ENCODE measurements at regions of chr14 and their contacts with region 1.

Region 1: GRCh38 chr14:39169541-39169900 is 612 bp downstream of the TRAPPC6B start:
- DNase-seq: no peak
- ATAC-seq: peak in 1 of 2 experiments; percentile 30; a peak in 3 of 6 replicates
- H3K4me3 ChIP-seq: peak overlapping the region; percentile 80
- H3K27ac ChIP-seq: peak overlapping the region; percentile 94 to 97
- H3K4me1 ChIP-seq: peaks cover 23% of the 10 kb centered on the region
- CTCF ChIP-seq: no peak
- EP300 ChIP-seq: no peak
- POLR2A ChIP-seq: no peak
- RAD21 ChIP-seq: no peak

Region 2: GRCh38 chr14:39114073-39114838 is 55.3 kb before region 1 on chr14 and contains the start of gene GEMIN2:
- CTCF ChIA-PET with region 1: interaction called, 3 read pairs
- POLR2A ChIA-PET with region 1: interaction called, 26 read pairs
- DNase-seq: peak; percentile 96 to 97
- ATAC-seq: peak; percentile 98
- H3K4me3 ChIP-seq: peak within 1 kb of the TSS; percentile 69
- H3K27ac ChIP-seq: peak within 1 kb of the TSS; percentile 83 to 85
- H3K4me1 ChIP-seq: peaks cover 13% of the 10 kb centered on the region; the same call in 2 of the 3 replicates
- CTCF ChIP-seq: no peak
- EP300 ChIP-seq: no peak
- POLR2A ChIP-seq: peak; percentile 94
- RAD21 ChIP-seq: no peak
- polyA plus RNA-seq, gene GEMIN2: 48.1 and 67.8 TPM in 2 replicates

Region 3: GRCh38 chr14:39157491-39157890 is 12.0 kb before region 1 on chr14:
- CTCF ChIA-PET with region 1: interaction called, 8 read pairs
- POLR2A ChIA-PET with region 1: interaction called, 10 read pairs
- DNase-seq: no peak
- ATAC-seq: no peak
- H3K4me3 ChIP-seq: no peak overlapping the region
- H3K27ac ChIP-seq: no peak overlapping the region
- H3K4me1 ChIP-seq: no peaks in the 10 kb centered on the region
- CTCF ChIP-seq: no peak
- EP300 ChIP-seq: no peak
- POLR2A ChIP-seq: no peak
- RAD21 ChIP-seq: no peak

Region 4: DNA sequence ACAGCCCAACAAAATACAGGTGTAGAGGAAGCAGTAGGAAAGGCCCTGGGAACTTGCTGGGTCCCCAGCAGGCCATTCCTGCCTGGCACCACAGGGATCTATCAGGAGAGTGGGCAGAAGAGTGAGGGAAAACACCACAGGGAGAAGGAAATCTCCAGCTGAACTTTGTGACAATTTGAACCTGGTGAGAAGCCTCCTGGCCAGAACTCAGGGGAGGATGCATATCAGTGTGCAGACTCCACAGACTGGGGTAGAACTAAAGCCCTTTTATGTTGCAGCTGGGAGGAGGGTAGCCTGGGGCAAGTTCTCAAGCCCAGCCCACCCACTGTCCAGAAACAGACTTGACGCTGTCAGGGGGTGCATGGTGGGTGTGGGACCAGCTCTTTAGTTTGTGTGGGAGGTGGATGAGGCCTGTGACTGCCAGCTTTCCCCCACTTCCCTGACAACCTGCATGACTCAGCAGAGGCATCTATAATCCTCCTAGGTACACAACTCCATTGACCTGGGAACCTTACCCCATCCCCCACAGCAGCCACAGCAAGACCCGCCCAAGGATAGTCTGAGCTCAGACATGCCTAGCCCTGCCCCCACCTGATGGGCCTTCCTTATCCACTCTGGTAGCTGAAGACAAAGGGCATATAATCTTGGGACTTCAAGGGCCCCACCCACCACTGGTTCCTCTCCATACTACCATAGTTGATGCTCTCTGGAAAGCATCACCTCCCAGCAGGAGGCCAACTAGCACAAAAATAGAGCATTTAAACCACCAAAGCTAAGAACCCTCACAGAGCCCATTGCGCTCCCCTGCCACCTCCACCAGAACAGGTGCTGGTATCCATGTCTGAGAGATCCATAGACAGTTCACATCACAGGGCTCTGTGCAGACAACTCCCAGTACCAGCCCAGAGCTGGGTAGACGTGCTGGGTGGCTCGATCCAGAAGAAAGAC is 34.4 kb after region 1 on chr14:
- CTCF ChIA-PET with region 1: no interaction called
- POLR2A ChIA-PET with region 1: interaction called, 12 read pairs
- DNase-seq: peak in 1 of 2 experiments; percentile 92
- ATAC-seq: peak; percentile 84 to 90
- H3K4me3 ChIP-seq: no peak overlapping the region
- H3K27ac ChIP-seq: peak overlapping the region; percentile 84 to 88
- H3K4me1 ChIP-seq: peaks cover 18% of the 10 kb centered on the region
- CTCF ChIP-seq: no peak
- EP300 ChIP-seq: 0 out of 5 replicates have a peak, but pooled peaks of 1 of the 2 experiments have one; percentile 27
- POLR2A ChIP-seq: no peak
- RAD21 ChIP-seq: peak in 1 of 2 experiments; percentile 29; a peak in 1 of 5 replicates

Region 5: GRCh38 chr14:39266871-39267591 is 97.5 kb after region 1 on chr14:
- CTCF ChIA-PET with region 1: no interaction called
- POLR2A ChIA-PET with region 1: interaction called, 89 read pairs
- DNase-seq: peak; percentile 58 to 90
- ATAC-seq: peak; percentile 91 to 94
- H3K4me3 ChIP-seq: peak overlapping the region; percentile 72
- H3K27ac ChIP-seq: peak overlapping the region; percentile 97 to 98
- H3K4me1 ChIP-seq: peaks cover 29% of the 10 kb centered on the region
- CTCF ChIP-seq: no peak
- EP300 ChIP-seq: no peak
- POLR2A ChIP-seq: peak; percentile 44
- RAD21 ChIP-seq: peak in 1 of 2 experiments; percentile 24; a peak in 1 of 5 replicates

Region 6: GRCh38 chr14:39432179-39432618 is 262.7 kb after region 1 on chr14 and contains the start of gene FBXO33:
- CTCF ChIA-PET with region 1: no interaction called
- POLR2A ChIA-PET with region 1: interaction called, 26 read pairs
- DNase-seq: peak; percentile 89 to 97
- ATAC-seq: peak; percentile 89 to 93
- H3K4me3 ChIP-seq: peak within 1 kb of the TSS; percentile 96
- H3K27ac ChIP-seq: peak within 1 kb of the TSS; percentile 93 to 98
- H3K4me1 ChIP-seq: peaks cover 17% of the 10 kb centered on the region; the same call in 2 of the 3 replicates
- CTCF ChIP-seq: no peak
- EP300 ChIP-seq: no peak
- POLR2A ChIP-seq: no peak
- RAD21 ChIP-seq: no peak
- polyA plus RNA-seq, gene FBXO33: 10.6 and 10.8 TPM in 2 replicates